ENCODE measurements at regions of chr4 and their contacts with region 1.

Region 1: GRCh38 chr4:47933840-47934239 is 19.5 kb upstream of the NFXL1 start:
- DNase-seq: no peak
- ATAC-seq: peak in 2 of 8 donors; percentile 38 to 41
- H3K4me3 ChIP-seq: no peak overlapping the region
- H3K27ac ChIP-seq: no peak overlapping the region
- H3K4me1 ChIP-seq: peaks cover 0 to 16% (median 0%) of the 10 kb centered on the region in 9 donors
- H3K27me3 ChIP-seq: peaks cover 0 to 11% (median 0%) of the 10 kb centered on the region in 7 donors
- CTCF ChIP-seq: peak; percentile 34 to 77 (median 68)

Region 2: DNA sequence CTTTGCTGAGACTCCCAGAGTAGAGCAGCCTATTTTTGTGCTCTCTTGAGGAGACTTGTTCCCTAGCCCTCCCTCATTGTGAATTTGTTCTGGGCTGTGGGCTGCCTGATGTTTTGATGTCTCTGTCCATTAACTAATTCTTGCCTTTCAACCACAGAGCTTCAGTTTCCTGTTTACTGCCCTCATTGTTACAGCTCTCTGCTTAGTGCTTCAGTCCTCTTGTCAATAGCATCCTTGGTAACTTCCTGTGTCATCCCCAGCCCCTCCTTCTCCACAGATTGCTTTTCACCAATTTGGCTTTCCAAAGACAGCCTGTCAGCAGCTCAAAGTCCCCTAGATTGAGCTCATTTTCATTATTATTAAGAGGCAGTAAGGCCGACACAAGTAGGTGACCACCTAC is 1094.7 kb before region 1 on chr4:
- intact Hi-C with region 1: loop called in 2 of 10 experiments (anchors 5 to 10 kb)
- DNase-seq: no peak
- ATAC-seq: no peak
- H3K4me3 ChIP-seq: no peak overlapping the region
- H3K27ac ChIP-seq: no peak overlapping the region
- H3K4me1 ChIP-seq: no peaks in the 10 kb centered on the region
- H3K27me3 ChIP-seq: no peaks in the 10 kb centered on the region
- CTCF ChIP-seq: no peak

Region 3: GRCh38 chr4:47071858-47072441 is 861.9 kb before region 1 on chr4:
- intact Hi-C with region 1: no loop called
- DNase-seq: no peak
- ATAC-seq: no peak
- H3K4me3 ChIP-seq: no peak overlapping the region
- H3K27ac ChIP-seq: no peak overlapping the region
- H3K4me1 ChIP-seq: peaks cover 0 to 10% (median 0%) of the 10 kb centered on the region in 9 donors
- H3K27me3 ChIP-seq: no peaks in the 10 kb centered on the region
- CTCF ChIP-seq: no peak

Region 4: DNA sequence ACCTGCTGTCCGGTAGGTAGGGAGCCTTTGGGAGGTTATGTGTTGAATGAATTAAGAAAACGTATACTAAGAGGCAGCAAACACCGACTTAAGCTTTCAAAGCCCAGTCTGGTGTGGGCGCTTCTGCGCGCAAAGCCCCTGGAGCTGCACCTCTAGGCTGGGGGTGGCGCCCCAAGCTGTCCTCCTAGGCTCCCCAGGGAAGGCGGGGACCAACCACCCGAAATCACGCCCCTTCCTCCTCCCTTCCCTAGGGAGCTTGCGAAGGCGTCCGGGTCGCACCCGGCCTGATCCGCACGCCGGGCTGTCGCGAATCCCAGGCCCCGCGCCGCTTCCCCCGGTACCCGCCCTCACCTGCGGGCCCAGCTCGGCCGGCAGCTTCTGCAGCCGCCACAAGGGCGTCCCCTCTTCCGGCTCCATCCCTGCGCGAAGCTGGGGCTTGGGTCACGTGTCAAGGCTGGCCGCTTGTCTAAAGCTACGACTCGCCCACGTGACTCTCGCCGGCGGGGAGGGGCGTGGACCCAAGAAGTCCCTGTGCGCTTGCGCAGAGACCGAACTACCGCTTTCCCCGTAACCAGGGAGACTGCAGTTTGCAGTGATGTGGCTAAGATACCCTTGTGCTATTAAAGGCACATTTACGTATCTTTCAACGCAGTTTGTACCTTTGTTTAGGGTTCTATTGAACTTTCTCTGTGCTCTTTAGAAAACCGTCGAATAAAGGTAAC is 470.4 kb before region 1 on chr4 and contains the start of gene COMMD8:
- intact Hi-C with region 1: no loop called
- DNase-seq: peak; percentile 96 to 97
- ATAC-seq: peak; percentile 99 to 100 (median 99)
- H3K4me3 ChIP-seq: peak within 1 kb of the TSS; percentile 60 to 92 (median 86)
- H3K27ac ChIP-seq: peak within 1 kb of the TSS; percentile 32 to 95 (median 88)
- H3K4me1 ChIP-seq: peaks cover 0 to 29% (median 16%) of the 10 kb centered on the region in 9 donors
- H3K27me3 ChIP-seq: no peaks in the 10 kb centered on the region
- CTCF ChIP-seq: peak in 7 of 9 donors; percentile 10 to 57 (median 43)
- total RNA-seq, gene COMMD8: 11.5 to 22.2 (median 15.2) TPM

Region 5: GRCh38 chr4:47668810-47669408 is 264.9 kb before region 1 on chr4:
- intact Hi-C with region 1: loop called in 6 of 10 experiments (anchors 2 to 10 kb)
- DNase-seq: peak in 1 of 2 donors; percentile 32
- ATAC-seq: peak in 6 of 8 donors; percentile 61 to 71 (median 68)
- H3K4me3 ChIP-seq: no peak overlapping the region
- H3K27ac ChIP-seq: no peak overlapping the region
- H3K4me1 ChIP-seq: no peaks in the 10 kb centered on the region
- H3K27me3 ChIP-seq: no peaks in the 10 kb centered on the region
- CTCF ChIP-seq: peak; percentile 57 to 76 (median 70)

Region 6: GRCh38 chr4:47686294-47686872 is 247.5 kb before region 1 on chr4:
- intact Hi-C with region 1: loop called in 7 of 10 experiments (anchors 5 to 10 kb)
- DNase-seq: peak; percentile 29 to 33
- ATAC-seq: peak in 7 of 8 donors; percentile 57 to 89 (median 77)
- H3K4me3 ChIP-seq: no peak overlapping the region
- H3K27ac ChIP-seq: no peak overlapping the region
- H3K4me1 ChIP-seq: no peaks in the 10 kb centered on the region
- H3K27me3 ChIP-seq: peaks cover 0 to under 1% (median 0%) of the 10 kb centered on the region in 7 donors
- CTCF ChIP-seq: peak; percentile 38 to 81 (median 69)

Region 7: GRCh38 chr4:47891928-47892327 is 41.9 kb before region 1 on chr4:
- intact Hi-C with region 1: no loop called
- DNase-seq: no peak
- ATAC-seq: no peak
- H3K4me3 ChIP-seq: no peak overlapping the region
- H3K27ac ChIP-seq: no peak overlapping the region
- H3K4me1 ChIP-seq: no peaks in the 10 kb centered on the region
- H3K27me3 ChIP-seq: no peaks in the 10 kb centered on the region
- CTCF ChIP-seq: no peak